ENCODE measurements at regions of chr6 and their contacts with region 1.

Region 1: GRCh38 chr6:36038120-36038876 is 10.7 kb downstream of the MAPK14 start:
- DNase-seq: no peak
- H3K4me3 ChIP-seq: no peak overlapping the region
- H3K27ac ChIP-seq: no peak overlapping the region
- H3K4me1 ChIP-seq: no peaks in the 10 kb centered on the region; a peak in 2 of 7 replicates
- H3K27me3 ChIP-seq: no peaks in the 10 kb centered on the region
- CTCF ChIP-seq: no peak
- EP300 ChIP-seq: no peak
- POLR2A ChIP-seq: no peak
- RAD21 ChIP-seq: no peak

Region 2: GRCh38 chr6:36015666-36016065 is 22.6 kb before region 1 on chr6:
- CTCF ChIA-PET with region 1: no interaction called
- POLR2A ChIA-PET with region 1: no interaction called
- DNase-seq: no peak
- H3K4me3 ChIP-seq: no peak overlapping the region
- H3K27ac ChIP-seq: no peak overlapping the region
- H3K4me1 ChIP-seq: no peaks in the 10 kb centered on the region
- H3K27me3 ChIP-seq: no peaks in the 10 kb centered on the region
- CTCF ChIP-seq: no peak
- EP300 ChIP-seq: no peak
- POLR2A ChIP-seq: no peak
- RAD21 ChIP-seq: no peak

Region 3: GRCh38 chr6:36027501-36028087 is 10.7 kb before region 1 on chr6 and contains the start of gene MAPK14:
- CTCF ChIA-PET with region 1: interaction called, 12 read pairs
- POLR2A ChIA-PET with region 1: interaction called, 8 read pairs
- DNase-seq: peak; percentile 97 to 98
- H3K4me3 ChIP-seq: peak within 1 kb of the TSS; percentile 91 to 95 (median 93)
- H3K27ac ChIP-seq: peak within 1 kb of the TSS; percentile 67; the same call in 1 of the 2 replicates
- H3K4me1 ChIP-seq: peaks cover 0 to 19% (median 13%) of the 10 kb centered on the region in 4 experiments; a peak in 5 of 7 replicates
- H3K27me3 ChIP-seq: no peaks in the 10 kb centered on the region
- CTCF ChIP-seq: peak; percentile 68 to 88 (median 86)
- EP300 ChIP-seq: no peak
- POLR2A ChIP-seq: peak; percentile 89 to 94
- RAD21 ChIP-seq: peak; percentile 79 to 81
- total RNA-seq, gene MAPK14: 33.2 and 39.3 TPM in 2 replicates

Region 4: GRCh38 chr6:36067374-36068011 is 29.2 kb after region 1 on chr6:
- CTCF ChIA-PET with region 1: no interaction called
- POLR2A ChIA-PET with region 1: no interaction called
- DNase-seq: no peak
- H3K4me3 ChIP-seq: no peak overlapping the region
- H3K27ac ChIP-seq: no peak overlapping the region
- H3K4me1 ChIP-seq: no peaks in the 10 kb centered on the region
- H3K27me3 ChIP-seq: no peaks in the 10 kb centered on the region
- CTCF ChIP-seq: no peak
- EP300 ChIP-seq: no peak
- POLR2A ChIP-seq: no peak
- RAD21 ChIP-seq: no peak

Region 5: DNA sequence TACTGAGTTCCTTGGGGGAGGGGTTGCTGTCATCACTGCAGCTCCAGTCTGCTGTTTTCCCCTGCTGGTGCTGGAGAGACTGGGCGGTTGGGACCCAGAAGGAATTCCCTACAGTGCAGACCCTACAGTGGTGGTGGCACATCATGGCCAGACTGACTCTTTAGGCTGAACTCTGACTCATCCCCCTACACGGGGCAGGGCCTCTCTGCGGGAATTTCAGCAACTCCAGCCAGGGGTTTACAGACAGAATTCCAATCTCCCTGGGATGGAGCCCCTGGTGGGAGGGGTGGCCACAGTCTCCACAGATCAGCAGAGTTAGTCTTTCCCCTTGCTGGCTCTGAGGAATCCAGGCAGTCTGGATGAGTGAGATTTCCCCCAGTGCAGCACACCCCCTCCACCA is 45.1 kb after region 1 on chr6:
- CTCF ChIA-PET with region 1: no interaction called
- POLR2A ChIA-PET with region 1: no interaction called
- DNase-seq: no peak
- H3K4me3 ChIP-seq: no peak overlapping the region
- H3K27ac ChIP-seq: no peak overlapping the region
- H3K4me1 ChIP-seq: no peaks in the 10 kb centered on the region
- H3K27me3 ChIP-seq: no peaks in the 10 kb centered on the region
- CTCF ChIP-seq: no peak
- EP300 ChIP-seq: no peak
- POLR2A ChIP-seq: no peak
- RAD21 ChIP-seq: no peak